CD8-positive, alpha-beta memory T cell (primary cell): ENCODE measurements at regions of chr1 and their contacts with region 1.

Region 1: GRCh38 chr1:155017041-155017945 is 14.7 kb downstream of the ZBTB7B start:
- DNase-seq: peak; percentile 82 to 91 (median 84)
- H3K4me3 ChIP-seq: no peak overlapping the region
- H3K4me3 Mint-ChIP-seq: peak overlapping the region; percentile 37 to 68 (median 57)
- H3K27ac ChIP-seq: peak overlapping the region; percentile 57
- H3K27ac Mint-ChIP-seq: peak overlapping the region in 6 of 8 donors; percentile 63 to 95 (median 74)
- H3K4me1 ChIP-seq: peaks cover 63% of the 10 kb centered on the region
- H3K4me1 Mint-ChIP-seq: peaks cover 42 to 53% (median 52%) of the 10 kb centered on the region in 3 donors
- H3K27me3 ChIP-seq: no peaks in the 10 kb centered on the region
- H3K27me3 Mint-ChIP-seq: no peaks in the 10 kb centered on the region

Region 2: GRCh38 chr1:154955718-154956543 is 61.4 kb before region 1 on chr1 and contains the start of gene PBXIP1:
- CTCF ChIA-PET with region 1: interaction called, 65 read pairs
- POLR2A ChIA-PET with region 1: interaction called, 7 read pairs
- DNase-seq: peak; percentile 67 to 94 (median 89)
- H3K4me3 ChIP-seq: peak within 1 kb of the TSS; percentile 85
- H3K4me3 Mint-ChIP-seq: peak within 1 kb of the TSS; percentile 95 to 99 (median 97)
- H3K27ac ChIP-seq: peak within 1 kb of the TSS; percentile 100
- H3K27ac Mint-ChIP-seq: peak within 1 kb of the TSS; percentile 99 to 100 (median 100)
- H3K4me1 ChIP-seq: peaks cover 66% of the 10 kb centered on the region
- H3K4me1 Mint-ChIP-seq: peaks cover 63 to 90% (median 77%) of the 10 kb centered on the region in 3 donors
- H3K27me3 ChIP-seq: no peaks in the 10 kb centered on the region
- H3K27me3 Mint-ChIP-seq: peaks cover 0 to 9% of the 10 kb centered on the region in 2 donors
- total RNA-seq, gene PBXIP1: 35.9 to 36.1 TPM

Region 3: DNA sequence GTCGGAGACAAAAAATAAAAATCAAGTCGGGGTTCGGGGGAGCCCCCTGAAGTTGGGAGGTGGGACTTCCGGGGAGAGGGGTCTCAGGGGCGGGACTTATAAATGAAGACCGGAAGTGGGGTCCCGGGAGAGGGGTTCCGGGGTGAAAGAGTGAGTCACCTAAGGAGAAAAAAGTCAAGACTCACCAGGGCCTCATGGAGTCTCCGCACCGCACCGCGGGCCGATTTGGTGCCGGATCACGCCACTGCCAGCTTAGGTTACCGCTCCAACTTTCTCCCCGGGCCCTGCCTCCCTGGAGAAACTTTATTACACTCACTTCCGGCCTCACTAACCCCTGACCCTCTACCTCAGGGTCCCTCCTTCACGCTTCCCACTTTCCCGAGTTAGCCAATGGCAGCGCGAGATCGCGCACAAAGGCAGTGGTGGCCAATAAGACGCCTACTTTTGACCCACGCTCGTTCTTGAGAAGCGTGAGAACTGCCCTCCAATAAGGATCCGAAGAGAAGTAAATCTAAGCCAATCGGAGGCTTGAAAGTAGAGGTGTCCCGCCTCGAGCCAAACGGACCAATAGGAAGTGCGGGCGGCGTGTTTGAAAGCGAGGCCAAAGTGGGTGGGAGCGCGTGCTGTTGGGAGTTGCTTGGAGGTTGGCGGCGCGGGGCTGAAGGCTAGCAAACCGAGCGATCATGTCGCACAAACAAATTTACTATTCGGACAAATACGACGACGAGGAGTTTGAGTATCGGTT is 43.1 kb before region 1 on chr1 and contains the start of gene CKS1B:
- CTCF ChIA-PET with region 1: interaction called, 54 read pairs
- POLR2A ChIA-PET with region 1: interaction called, 3 read pairs
- DNase-seq: peak; percentile 93 to 99 (median 98)
- H3K4me3 ChIP-seq: peak within 1 kb of the TSS; percentile 95
- H3K4me3 Mint-ChIP-seq: no peak within 1 kb of the TSS
- H3K27ac ChIP-seq: peak within 1 kb of the TSS; percentile 95
- H3K27ac Mint-ChIP-seq: no peak within 1 kb of the TSS
- H3K4me1 ChIP-seq: peaks cover 40% of the 10 kb centered on the region
- H3K4me1 Mint-ChIP-seq: peaks cover 24 to 34% (median 28%) of the 10 kb centered on the region in 3 donors
- H3K27me3 ChIP-seq: no peaks in the 10 kb centered on the region
- H3K27me3 Mint-ChIP-seq: no peaks in the 10 kb centered on the region
- total RNA-seq, gene CKS1B: 125 to 126 TPM

Region 4: GRCh38 chr1:154988120-154988957 is 29.0 kb before region 1 on chr1:
- CTCF ChIA-PET with region 1: interaction called, 207 read pairs
- POLR2A ChIA-PET with region 1: no interaction called
- DNase-seq: no peak
- H3K4me3 ChIP-seq: no peak overlapping the region
- H3K4me3 Mint-ChIP-seq: no peak overlapping the region
- H3K27ac ChIP-seq: no peak overlapping the region
- H3K27ac Mint-ChIP-seq: peak overlapping the region in 3 of 8 donors; percentile 23 to 81 (median 72)
- H3K4me1 ChIP-seq: peaks cover 14% of the 10 kb centered on the region
- H3K4me1 Mint-ChIP-seq: peaks cover 14 to 23% (median 14%) of the 10 kb centered on the region in 3 donors
- H3K27me3 ChIP-seq: no peaks in the 10 kb centered on the region
- H3K27me3 Mint-ChIP-seq: no peaks in the 10 kb centered on the region

Region 5: DNA sequence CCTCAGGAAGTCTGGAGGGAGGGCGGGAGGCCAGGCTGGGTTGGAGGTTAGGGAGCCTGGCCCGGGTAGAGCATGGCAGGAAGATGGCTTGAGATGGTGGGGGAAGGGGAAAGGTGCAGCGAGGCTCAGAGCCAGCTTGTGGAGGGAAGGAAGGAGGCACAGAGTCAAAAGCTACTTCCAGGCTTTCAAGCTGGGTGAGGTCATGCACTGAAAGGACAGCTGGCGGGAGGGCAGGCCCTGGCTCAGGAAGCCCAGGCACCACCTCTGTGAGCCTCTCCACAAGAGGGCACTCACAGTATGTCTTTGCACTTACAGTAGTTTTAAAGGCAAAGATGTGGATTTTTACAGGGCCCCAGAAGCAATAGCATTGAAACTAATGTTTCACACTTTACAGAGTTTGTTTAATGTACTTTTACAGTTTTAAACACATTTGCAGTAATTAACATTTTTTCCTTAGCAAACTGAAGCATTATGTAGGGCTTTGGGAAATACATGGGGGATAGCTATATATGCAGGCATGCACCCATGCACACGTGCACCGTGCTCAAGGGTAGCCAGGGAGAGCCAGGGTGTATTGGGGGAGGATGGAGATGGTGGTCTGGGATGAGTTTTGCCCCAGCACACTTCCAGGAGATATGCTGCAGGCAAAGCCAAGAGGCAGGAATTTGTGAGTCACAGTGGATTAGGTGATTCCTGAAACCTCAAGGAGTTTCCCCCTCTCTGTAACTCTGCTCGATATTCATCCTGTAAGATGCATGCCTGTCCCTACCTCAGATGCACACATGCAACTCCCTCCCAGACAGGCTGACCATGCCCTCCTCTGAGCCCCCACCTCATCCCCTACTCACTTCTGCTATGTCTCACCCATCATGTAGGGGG is 27.8 kb after region 1 on chr1:
- CTCF ChIA-PET with region 1: interaction called, 10 read pairs
- POLR2A ChIA-PET with region 1: no interaction called
- DNase-seq: peak; percentile 34 to 75 (median 57)
- H3K4me3 ChIP-seq: no peak overlapping the region
- H3K4me3 Mint-ChIP-seq: peak overlapping the region in 1 of 7 donors; percentile 49
- H3K27ac ChIP-seq: no peak overlapping the region
- H3K27ac Mint-ChIP-seq: no peak overlapping the region
- H3K4me1 ChIP-seq: peaks cover under 1% of the 10 kb centered on the region
- H3K4me1 Mint-ChIP-seq: peaks cover 5 to 11% (median 6%) of the 10 kb centered on the region in 3 donors
- H3K27me3 ChIP-seq: no peaks in the 10 kb centered on the region
- H3K27me3 Mint-ChIP-seq: peaks cover 3 to 4% of the 10 kb centered on the region in 2 donors